Activated CD8-positive, alpha-beta T cell treated with anti-CD3 and anti-CD28 coated beads for 36 hours (primary cell): ENCODE measurements at regions of chr19 and their contacts with region 1.

Region 1: GRCh38 chr19:33406521-33407139 is 33.1 kb downstream of the CEBPG start:
- DNase-seq: peak; percentile 81
- ATAC-seq: peak; percentile 91
- H3K4me3 Mint-ChIP-seq: no peak overlapping the region
- H3K27ac Mint-ChIP-seq: no peak overlapping the region
- H3K4me1 Mint-ChIP-seq: peaks cover 2% of the 10 kb centered on the region
- H3K27me3 Mint-ChIP-seq: no peaks in the 10 kb centered on the region
- CTCF ChIP-seq: peak; percentile 84

Region 2: DNA sequence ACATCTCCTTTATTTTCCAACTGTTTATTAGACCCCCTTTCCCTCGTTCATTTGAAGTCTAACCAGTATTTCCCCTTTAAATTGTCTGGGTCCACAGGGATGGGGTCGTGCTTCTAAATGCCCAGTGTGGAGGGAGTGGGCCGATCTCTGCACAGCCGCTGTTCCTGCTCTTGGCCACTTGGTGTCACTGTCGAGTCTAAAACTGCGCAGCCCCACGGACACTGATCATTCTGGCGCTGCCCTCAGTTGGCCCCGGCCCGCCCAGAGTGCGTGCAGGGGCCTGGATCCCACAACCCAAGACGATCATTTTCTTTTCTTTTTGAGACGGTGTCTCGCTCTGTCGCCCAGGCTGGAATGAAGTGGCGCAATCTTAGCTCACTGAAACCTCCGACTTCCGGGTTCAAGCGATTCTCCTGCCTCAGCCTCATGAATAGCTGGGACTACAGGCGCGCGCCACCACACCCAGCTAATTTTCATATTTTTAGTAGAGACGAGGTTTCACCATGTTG is 262.7 kb before region 1 on chr19:
- CTCF ChIA-PET with region 1: interaction called, 3 read pairs
- POLR2A ChIA-PET with region 1: no interaction called
- intact Hi-C with region 1: loop called (anchors 10 kb)
- DNase-seq: peak; percentile 76
- ATAC-seq: peak; percentile 100
- H3K4me3 Mint-ChIP-seq: no peak overlapping the region
- H3K27ac Mint-ChIP-seq: no peak overlapping the region
- H3K4me1 Mint-ChIP-seq: peaks cover 4% of the 10 kb centered on the region
- H3K27me3 Mint-ChIP-seq: peaks cover 3% of the 10 kb centered on the region
- CTCF ChIP-seq: peak; percentile 93

Region 3: GRCh38 chr19:33235269-33235995 is 171.2 kb before region 1 on chr19:
- CTCF ChIA-PET with region 1: interaction called, 34 read pairs
- POLR2A ChIA-PET with region 1: interaction called, 4 read pairs
- intact Hi-C with region 1: loop called (anchors 2 kb)
- DNase-seq: peak; percentile 87
- ATAC-seq: peak; percentile 72
- H3K4me3 Mint-ChIP-seq: no peak overlapping the region
- H3K27ac Mint-ChIP-seq: no peak overlapping the region
- H3K4me1 Mint-ChIP-seq: no peaks in the 10 kb centered on the region
- H3K27me3 Mint-ChIP-seq: peaks cover 10% of the 10 kb centered on the region
- CTCF ChIP-seq: peak; percentile 95